ENCODE measurements at regions of chr16 and their contacts with region 1.

Region 1: GRCh38 chr16:10752843-10753523 is 9.3 kb downstream of the NUBP1 start:
- DNase-seq: no peak
- ATAC-seq: no peak
- H3K4me3 Mint-ChIP-seq: no peak overlapping the region
- H3K27ac Mint-ChIP-seq: 0 out of 2 replicates have a peak overlapping the region, but pooled peaks have one; percentile 7
- H3K4me1 Mint-ChIP-seq: no peaks in the 10 kb centered on the region
- H3K27me3 Mint-ChIP-seq: no peaks in the 10 kb centered on the region
- CTCF ChIP-seq: no peak

Region 2: DNA sequence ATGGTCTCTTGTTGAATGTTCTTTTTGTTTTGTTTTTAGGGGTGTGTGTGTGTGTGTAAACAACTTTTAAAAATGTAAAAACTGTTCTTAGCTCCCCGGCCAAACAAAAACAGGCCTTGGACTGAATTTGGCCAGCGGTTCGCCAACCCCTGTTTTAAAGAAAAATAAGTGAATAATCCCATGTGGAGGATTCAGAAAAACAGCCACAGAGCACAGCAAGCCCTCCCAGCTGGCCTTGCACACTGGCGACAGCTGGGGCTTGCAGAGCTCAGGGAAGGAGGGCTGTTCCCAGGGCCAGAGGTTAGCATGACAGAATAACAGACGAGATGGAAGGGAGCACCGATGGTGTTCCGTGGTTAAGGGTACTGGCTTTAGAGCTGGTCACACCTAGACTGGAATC is 211.6 kb before region 1 on chr16:
- CTCF ChIA-PET with region 1: no interaction called
- POLR2A ChIA-PET with region 1: interaction called, 10 read pairs
- DNase-seq: no peak
- ATAC-seq: no peak
- H3K4me3 Mint-ChIP-seq: no peak overlapping the region
- H3K27ac Mint-ChIP-seq: no peak overlapping the region
- H3K4me1 Mint-ChIP-seq: no peaks in the 10 kb centered on the region
- H3K27me3 Mint-ChIP-seq: no peaks in the 10 kb centered on the region
- CTCF ChIP-seq: no peak

Measured in WTC11 (cell line).